Endothelial cell of umbilical vein (primary cell): ENCODE measurements at regions of chr17 and their contacts with region 1.

Region 1: DNA sequence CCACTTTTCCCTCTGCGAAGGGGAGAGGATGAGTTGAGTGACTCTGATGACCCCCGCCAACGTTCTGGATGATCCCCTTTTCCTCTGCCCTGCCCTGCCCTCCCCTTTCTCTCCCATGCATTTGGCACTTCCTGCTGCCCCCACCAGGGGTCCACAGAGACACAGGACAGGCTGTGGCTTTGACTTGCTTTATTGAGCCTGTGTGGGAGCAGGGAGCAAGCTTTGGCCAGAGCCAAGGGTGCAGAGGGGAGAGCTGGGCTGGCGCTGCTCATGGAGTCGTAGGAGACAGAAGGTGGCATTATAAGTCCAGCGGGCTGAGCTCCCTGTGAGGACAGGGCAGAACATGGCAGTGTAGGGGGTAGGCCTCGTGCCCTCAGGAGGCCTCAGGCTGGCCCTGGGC is 1.6 kb downstream of the PPY start:
- DNase-seq: peak; percentile 16
- H3K4me3 ChIP-seq: no peak overlapping the region
- H3K27ac ChIP-seq: no peak overlapping the region
- H3K4me1 ChIP-seq: no peaks in the 10 kb centered on the region
- H3K27me3 ChIP-seq: no peaks in the 10 kb centered on the region
- CTCF ChIP-seq: peak; percentile 41 to 57
- POLR2A ChIP-seq: no peak

Region 2: DNA sequence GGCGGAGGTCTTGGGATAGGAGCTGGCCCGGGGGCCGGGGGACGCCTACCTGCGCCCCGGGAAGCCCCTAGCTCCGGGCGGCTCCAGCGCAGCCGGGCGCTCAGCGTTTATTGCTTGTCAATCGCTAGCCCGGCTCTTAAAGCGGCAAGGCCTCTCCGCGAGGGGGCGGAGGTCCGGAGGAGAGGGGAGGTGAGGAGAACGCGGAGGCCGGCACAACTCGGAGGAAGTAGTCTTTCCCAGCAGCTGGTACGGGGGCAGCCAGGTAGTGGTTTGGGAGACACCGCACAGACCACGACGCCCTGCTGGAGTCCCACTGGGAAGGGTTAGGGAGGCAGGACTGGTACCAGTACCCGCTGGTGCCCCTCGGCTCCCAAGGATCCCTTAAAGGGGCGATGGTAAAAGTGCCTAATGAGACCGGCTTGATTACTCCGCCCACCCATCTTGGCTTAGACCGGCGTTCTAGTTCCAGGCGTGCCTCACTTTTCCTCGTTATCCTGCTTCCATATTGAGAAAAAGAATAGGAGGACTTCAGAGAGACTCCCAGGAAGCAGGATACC is 33.1 kb before region 1 on chr17 and contains the start of gene MPP2:
- CTCF ChIA-PET with region 1: interaction called, 14 read pairs
- POLR2A ChIA-PET with region 1: no interaction called
- dilution Hi-C with region 1: no loop called
- intact Hi-C with region 1: no loop called
- DNase-seq: peak; percentile 55
- H3K4me3 ChIP-seq: peak within 1 kb of the TSS in 1 of 3 experiments; percentile 26
- H3K27ac ChIP-seq: no peak within 1 kb of the TSS
- H3K4me1 ChIP-seq: peaks cover 3% of the 10 kb centered on the region
- H3K27me3 ChIP-seq: peaks cover 44 to 51% of the 10 kb centered on the region in 2 experiments
- CTCF ChIP-seq: peak in 1 of 2 donors; percentile 23
- POLR2A ChIP-seq: no peak
- total RNA-seq, gene MPP2: 1.2 and 1.6 TPM in 2 replicates

Region 3: GRCh38 chr17:43958953-43959352 is 18.3 kb after region 1 on chr17:
- CTCF ChIA-PET with region 1: interaction called, 42 read pairs
- POLR2A ChIA-PET with region 1: no interaction called
- dilution Hi-C with region 1: no loop called
- intact Hi-C with region 1: no loop called
- DNase-seq: no peak
- H3K4me3 ChIP-seq: no peak overlapping the region
- H3K27ac ChIP-seq: no peak overlapping the region
- H3K4me1 ChIP-seq: no peaks in the 10 kb centered on the region
- H3K27me3 ChIP-seq: peaks cover 10 to 14% of the 10 kb centered on the region in 2 experiments
- CTCF ChIP-seq: no peak
- POLR2A ChIP-seq: no peak

Region 4: DNA sequence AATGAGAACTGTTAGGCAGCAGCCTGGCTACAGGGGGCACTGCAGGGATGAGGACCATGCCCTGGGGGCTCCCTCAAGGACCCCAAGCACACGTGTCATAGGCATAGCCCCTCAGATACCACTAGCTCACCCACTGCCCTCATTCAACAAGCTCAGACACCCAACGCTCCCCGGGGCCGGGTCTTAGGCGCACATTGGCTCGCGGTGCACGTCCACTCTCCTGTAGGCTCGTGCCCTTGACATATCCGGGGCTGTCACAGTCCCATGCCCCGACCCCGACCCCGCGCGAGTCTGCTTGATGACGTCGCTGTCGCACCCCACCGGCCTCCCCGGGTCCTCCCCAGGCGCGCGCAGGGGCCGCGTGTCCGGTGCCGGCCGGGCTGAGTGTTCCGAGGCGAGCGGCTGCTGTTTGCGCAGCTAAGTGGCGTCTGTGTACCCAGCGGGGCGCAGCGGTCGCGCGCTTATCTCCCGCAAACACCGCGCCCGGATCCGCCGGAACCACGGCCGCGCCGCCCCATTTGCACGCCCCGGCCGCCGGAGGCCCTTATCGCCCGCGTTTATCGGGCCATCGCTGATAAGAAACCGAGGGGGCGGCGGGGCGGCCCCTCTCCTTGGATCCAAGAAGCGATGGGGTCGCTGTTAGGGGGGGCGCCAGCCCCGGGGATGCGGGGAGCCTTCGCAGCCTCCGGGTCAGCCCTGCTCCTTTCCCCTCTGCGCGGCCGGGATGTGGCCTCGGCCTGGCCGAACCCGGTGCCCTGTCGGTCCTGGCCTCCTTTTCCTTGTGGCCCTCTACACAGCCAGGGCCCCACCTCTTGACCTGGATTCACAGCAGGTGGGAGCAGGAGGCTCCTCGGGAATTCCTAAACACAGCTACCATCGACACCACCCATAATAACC is 43.1 kb after region 1 on chr17:
- CTCF ChIA-PET with region 1: interaction called, 182 read pairs
- POLR2A ChIA-PET with region 1: no interaction called
- dilution Hi-C with region 1: no loop called
- intact Hi-C with region 1: no loop called
- DNase-seq: no peak
- H3K4me3 ChIP-seq: peak overlapping the region; percentile 16 to 33 (median 22)
- H3K27ac ChIP-seq: no peak overlapping the region
- H3K4me1 ChIP-seq: peaks cover 4% of the 10 kb centered on the region
- H3K27me3 ChIP-seq: peaks cover 13% of the 10 kb centered on the region in 2 experiments
- CTCF ChIP-seq: peak; percentile 18 to 43
- POLR2A ChIP-seq: no peak

Region 5: GRCh38 chr17:44024271-44024663 is 83.6 kb after region 1 on chr17:
- CTCF ChIA-PET with region 1: interaction called, 10 read pairs
- POLR2A ChIA-PET with region 1: no interaction called
- dilution Hi-C with region 1: no loop called
- intact Hi-C with region 1: no loop called
- DNase-seq: no peak
- H3K4me3 ChIP-seq: no peak overlapping the region
- H3K27ac ChIP-seq: no peak overlapping the region
- H3K4me1 ChIP-seq: no peaks in the 10 kb centered on the region
- H3K27me3 ChIP-seq: no peaks in the 10 kb centered on the region
- CTCF ChIP-seq: no peak
- POLR2A ChIP-seq: no peak

Region 6: DNA sequence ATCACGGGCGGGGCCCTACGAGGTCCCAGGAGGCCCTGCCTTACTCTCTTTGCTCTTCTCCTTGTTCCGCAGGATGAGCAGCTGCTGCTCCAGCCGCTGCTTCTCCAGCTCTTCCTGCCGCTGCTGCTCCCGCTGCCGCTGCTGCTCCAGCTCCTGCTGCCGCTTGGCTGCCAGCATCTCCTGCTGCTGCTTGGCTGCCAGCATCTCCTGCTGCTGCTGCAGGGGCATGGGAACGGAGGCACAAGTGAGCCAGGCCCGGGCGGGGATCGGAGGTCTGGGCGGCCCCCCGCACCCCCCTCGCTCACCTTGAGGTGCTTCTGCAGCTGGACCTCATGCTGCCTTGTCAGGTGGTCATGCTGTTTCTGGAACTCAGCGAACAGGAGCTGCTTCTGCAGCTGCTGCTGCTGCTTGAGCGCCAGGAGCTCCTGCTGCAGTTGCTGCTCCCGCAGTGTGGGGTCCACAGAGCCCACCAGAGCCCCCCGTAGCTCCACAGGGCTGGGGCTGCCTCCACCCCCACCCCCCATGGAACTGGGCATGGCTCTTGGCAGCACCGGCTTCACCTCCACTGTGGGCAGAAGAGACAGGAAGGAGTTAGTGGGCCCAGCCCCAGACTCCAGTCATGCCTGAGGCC is 152.8 kb after region 1 on chr17:
- CTCF ChIA-PET with region 1: no interaction called
- POLR2A ChIA-PET with region 1: no interaction called
- dilution Hi-C with region 1: no loop called
- intact Hi-C with region 1: no loop called
- DNase-seq: no peak
- H3K4me3 ChIP-seq: no peak overlapping the region
- H3K27ac ChIP-seq: no peak overlapping the region
- H3K4me1 ChIP-seq: peaks cover 23% of the 10 kb centered on the region
- H3K27me3 ChIP-seq: no peaks in the 10 kb centered on the region
- CTCF ChIP-seq: no peak
- POLR2A ChIP-seq: no peak

Region 7: GRCh38 chr17:44110823-44111633 is 170.4 kb after region 1 on chr17:
- CTCF ChIA-PET with region 1: interaction called, 39 read pairs
- POLR2A ChIA-PET with region 1: no interaction called
- dilution Hi-C with region 1: no loop called
- intact Hi-C with region 1: loop called (anchors 1 kb)
- DNase-seq: peak; percentile 87
- H3K4me3 ChIP-seq: peak overlapping the region in 2 of 3 experiments; percentile 10 to 40
- H3K27ac ChIP-seq: no peak overlapping the region
- H3K4me1 ChIP-seq: peaks cover 14% of the 10 kb centered on the region
- H3K27me3 ChIP-seq: no peaks in the 10 kb centered on the region
- CTCF ChIP-seq: no peak
- POLR2A ChIP-seq: no peak